ENCODE measurements at regions of chr3 and their contacts with region 1.

Region 1: GRCh38 chr3:45688882-45689756 is at the start of gene SACM1L:
- DNase-seq: peak; percentile 95
- H3K4me3 ChIP-seq: peak within 1 kb of the TSS; percentile 85
- H3K27me3 ChIP-seq: no peaks in the 10 kb centered on the region
- CTCF ChIP-seq: no peak
- polyA plus RNA-seq, gene SACM1L: 10.8 and 27.2 TPM in 2 replicates

Region 2: GRCh38 chr3:45665101-45665572 is 24.0 kb before region 1 on chr3:
- CTCF ChIA-PET with region 1: interaction called, 11 read pairs
- POLR2A ChIA-PET with region 1: no interaction called
- DNase-seq: no peak
- H3K4me3 ChIP-seq: no peak overlapping the region
- H3K27me3 ChIP-seq: no peaks in the 10 kb centered on the region
- CTCF ChIP-seq: peak; percentile 36; the same call in 1 of the 2 replicates

Region 3: DNA sequence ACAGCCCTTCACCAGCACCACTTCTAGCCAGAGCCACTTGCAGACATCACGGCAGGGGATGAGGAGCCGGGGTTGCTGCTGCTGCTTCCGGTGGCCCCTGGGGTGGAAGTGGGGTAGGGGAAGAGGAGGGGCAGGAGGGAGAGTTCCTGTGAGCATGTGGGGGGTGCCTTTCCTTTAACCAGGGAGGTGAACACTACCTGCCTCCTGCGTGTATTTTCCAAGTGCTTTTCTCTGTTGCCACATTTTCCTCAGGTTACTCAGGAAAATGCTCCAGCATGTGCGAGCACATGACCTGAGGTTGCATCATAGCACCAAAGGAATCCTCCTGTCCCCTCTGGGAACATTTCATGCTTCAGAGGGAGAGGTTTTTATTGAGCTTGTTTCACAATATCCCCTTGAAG is 12.1 kb before region 1 on chr3:
- CTCF ChIA-PET with region 1: interaction called, 12 read pairs
- POLR2A ChIA-PET with region 1: interaction called, 3 read pairs
- DNase-seq: peak; percentile 70
- H3K4me3 ChIP-seq: no peak overlapping the region
- H3K27me3 ChIP-seq: no peaks in the 10 kb centered on the region
- CTCF ChIP-seq: no peak

Region 4: DNA sequence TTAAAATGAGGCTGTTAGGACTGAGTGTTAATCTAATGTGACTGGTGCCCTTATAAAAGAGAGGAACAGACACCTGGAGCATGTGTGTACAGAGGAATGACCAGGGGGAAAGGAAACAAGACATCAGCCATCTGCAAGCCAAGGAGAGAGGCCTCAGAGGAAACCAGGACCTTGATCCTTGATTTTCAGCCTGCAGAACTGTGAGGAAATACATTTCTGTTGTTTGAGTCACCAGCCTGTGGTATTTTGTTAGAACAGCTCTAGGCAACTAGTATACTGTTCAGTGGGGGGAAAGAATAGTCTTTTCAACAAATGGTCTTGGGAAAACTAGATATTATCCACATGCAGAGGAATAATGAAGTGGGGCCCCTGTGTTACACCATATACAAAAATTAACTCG is 438.4 kb after region 1 on chr3:
- CTCF ChIA-PET with region 1: no interaction called
- POLR2A ChIA-PET with region 1: no interaction called
- DNase-seq: peak; percentile 78
- H3K4me3 ChIP-seq: no peak overlapping the region
- H3K27me3 ChIP-seq: no peaks in the 10 kb centered on the region
- CTCF ChIP-seq: no peak